Mammary epithelial cell (primary cell): ENCODE measurements at regions of chr1 and their contacts with region 1.

Region 1: DNA sequence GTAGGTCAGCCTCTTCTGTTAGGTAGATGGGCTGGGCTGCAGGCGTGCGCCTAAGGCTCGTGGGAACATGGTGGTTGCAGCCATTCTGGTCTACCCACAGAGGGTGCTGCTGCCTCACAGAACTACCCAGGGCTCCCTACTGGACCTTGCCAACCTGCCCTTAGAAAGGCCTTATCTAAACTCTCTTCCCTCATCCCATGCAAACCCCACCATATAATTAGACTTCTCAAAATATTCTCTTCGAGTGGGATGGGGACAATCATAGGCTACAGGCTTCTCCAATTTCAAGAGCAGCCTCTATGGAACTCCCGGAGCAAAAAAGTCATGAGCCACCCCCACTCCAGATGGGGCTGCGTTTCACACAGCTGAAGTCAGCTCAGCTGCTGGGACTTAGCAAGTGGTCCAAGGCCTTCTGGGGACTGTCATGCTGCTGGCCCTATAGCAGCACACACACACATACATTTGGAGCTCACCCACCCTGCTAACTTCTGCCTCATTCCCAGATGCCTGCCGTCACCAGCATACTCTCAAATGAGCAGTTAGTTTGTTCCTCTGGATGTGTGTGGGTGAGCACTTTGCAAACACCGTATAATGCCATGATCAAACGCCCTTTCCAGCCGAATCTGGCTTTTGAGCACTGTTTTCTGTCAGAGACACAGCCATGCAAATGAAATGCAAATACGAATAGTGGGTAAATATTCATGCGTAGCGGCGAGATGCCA is 6.1 kb upstream of the SDHB start:
- DNase-seq: peak; percentile 60
- H3K4me3 ChIP-seq: no peak overlapping the region
- H3K27ac ChIP-seq: no peak overlapping the region
- H3K4me1 ChIP-seq: peaks cover 8% of the 10 kb centered on the region
- H3K27me3 ChIP-seq: no peaks in the 10 kb centered on the region
- CTCF ChIP-seq: peak; percentile 76 to 85

Region 2: DNA sequence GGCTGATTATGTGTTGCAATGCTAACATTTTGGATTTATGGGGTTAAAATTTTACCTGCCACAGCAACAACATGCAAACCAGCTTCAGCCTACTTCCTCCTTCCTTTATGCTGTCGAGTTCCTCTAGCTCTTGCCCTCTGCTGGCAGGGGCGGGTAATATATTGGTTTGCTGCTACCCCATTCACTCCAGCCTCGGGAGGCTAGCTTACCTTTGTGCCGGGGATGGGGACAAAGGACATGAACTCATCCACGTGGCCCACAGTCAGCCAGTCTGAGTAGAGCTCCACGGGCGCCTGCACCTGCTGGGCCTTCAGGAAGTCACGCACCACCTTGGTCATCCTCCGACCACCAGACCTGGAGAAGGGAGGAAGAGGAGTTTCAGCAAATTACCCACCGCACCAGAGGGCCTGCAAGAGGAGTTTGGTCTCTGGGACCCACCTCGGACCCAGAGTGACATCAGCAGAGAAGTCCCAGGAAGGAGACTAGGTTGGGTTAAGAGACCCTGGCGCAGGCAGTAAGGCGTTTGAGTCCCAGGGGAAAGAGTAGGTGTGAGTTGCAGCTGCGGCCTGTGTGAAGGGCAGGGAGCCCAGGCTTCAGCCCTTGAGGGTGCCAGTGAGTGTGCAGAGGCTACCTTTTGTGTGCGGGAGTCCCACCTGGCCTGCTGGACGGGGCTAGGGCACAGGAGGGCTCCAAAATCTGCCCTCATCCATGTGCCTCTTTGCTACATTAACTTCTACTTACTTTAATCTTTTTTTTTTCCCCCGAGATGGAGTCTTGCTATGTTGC is 15.8 kb after region 1 on chr1:
- CTCF ChIA-PET with region 1: no interaction called
- dilution Hi-C with region 1: no loop called
- in situ Hi-C with region 1: no loop called
- intact Hi-C with region 1: loop called (anchors 1 kb)
- DNase-seq: no peak
- H3K4me3 ChIP-seq: no peak overlapping the region
- H3K27ac ChIP-seq: no peak overlapping the region
- H3K4me1 ChIP-seq: no peaks in the 10 kb centered on the region
- H3K27me3 ChIP-seq: no peaks in the 10 kb centered on the region
- CTCF ChIP-seq: peak; percentile 49 to 53

Region 3: GRCh38 chr1:17119076-17119772 is 59.3 kb after region 1 on chr1 and contains the start of gene PADI2:
- CTCF ChIA-PET with region 1: no interaction called
- dilution Hi-C with region 1: loop called (anchors 5 kb)
- in situ Hi-C with region 1: no loop called
- intact Hi-C with region 1: loop called (anchors 2 kb)
- DNase-seq: peak; percentile 59
- H3K4me3 ChIP-seq: peak within 1 kb of the TSS in 2 of 3 experiments; percentile 37 to 44
- H3K27ac ChIP-seq: no peak within 1 kb of the TSS
- H3K4me1 ChIP-seq: peaks cover 12% of the 10 kb centered on the region
- H3K27me3 ChIP-seq: no peaks in the 10 kb centered on the region
- CTCF ChIP-seq: no peak
- total RNA-seq, gene PADI2: 1.3 to 2.2 TPM

Region 4: DNA sequence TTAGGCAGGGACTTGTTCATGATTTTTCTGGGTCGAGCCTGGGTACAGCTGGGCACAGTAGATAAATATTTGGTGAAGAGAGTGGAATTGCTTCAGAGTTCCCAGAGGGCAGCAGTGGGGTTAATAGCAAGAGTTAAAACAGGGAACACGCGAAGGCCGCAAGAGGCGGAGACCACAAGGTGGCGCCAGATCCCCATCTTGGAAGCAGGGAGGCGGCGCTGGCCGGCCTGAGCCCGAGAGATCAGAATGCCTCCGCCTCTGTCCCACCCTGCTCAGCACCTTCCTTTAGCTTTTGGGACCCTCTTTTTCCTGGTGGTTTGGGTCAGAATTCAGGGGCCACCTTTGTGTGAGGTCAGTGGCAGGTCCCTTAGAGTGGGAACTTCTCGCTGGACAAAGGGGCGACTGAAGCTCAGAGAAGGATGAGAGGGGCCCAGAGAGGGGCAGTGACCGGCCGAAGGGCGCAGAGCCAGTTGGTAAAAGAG is 65.9 kb after region 1 on chr1:
- CTCF ChIA-PET with region 1: no interaction called
- dilution Hi-C with region 1: no loop called
- in situ Hi-C with region 1: no loop called
- intact Hi-C with region 1: loop called (anchors 1 kb)
- DNase-seq: peak; percentile 61
- H3K4me3 ChIP-seq: no peak overlapping the region
- H3K27ac ChIP-seq: no peak overlapping the region
- H3K4me1 ChIP-seq: peaks cover 31% of the 10 kb centered on the region
- H3K27me3 ChIP-seq: no peaks in the 10 kb centered on the region
- CTCF ChIP-seq: peak; percentile 86 to 96

Region 5: DNA sequence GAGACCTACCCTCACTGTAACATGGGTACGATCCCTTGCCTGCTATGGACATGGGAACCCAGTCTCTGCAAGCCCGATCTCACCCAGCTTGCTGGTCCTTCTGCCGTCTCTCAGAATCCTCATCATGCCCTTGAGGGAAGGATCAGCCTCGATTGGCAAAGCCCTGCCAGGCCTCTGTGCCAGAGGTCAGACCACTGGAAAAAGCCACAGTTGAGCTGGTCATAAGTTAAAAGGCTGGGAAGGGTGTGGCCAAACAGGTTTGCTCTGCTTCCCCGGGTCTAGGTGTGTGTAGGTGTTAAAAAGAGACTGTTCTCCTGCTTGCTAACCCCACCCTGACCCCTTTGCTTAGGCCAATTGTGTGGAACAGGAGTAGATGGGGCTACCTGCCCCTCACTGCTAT is 169.5 kb after region 1 on chr1:
- CTCF ChIA-PET with region 1: no interaction called
- dilution Hi-C with region 1: loop called (anchors 10 kb)
- in situ Hi-C with region 1: loop called in 1 of 2 experiments (anchors 5 kb)
- intact Hi-C with region 1: no loop called
- DNase-seq: peak; percentile 56
- H3K4me3 ChIP-seq: no peak overlapping the region
- H3K27ac ChIP-seq: no peak overlapping the region
- H3K4me1 ChIP-seq: peaks cover 45% of the 10 kb centered on the region
- H3K27me3 ChIP-seq: no peaks in the 10 kb centered on the region
- CTCF ChIP-seq: no peak

Region 6: DNA sequence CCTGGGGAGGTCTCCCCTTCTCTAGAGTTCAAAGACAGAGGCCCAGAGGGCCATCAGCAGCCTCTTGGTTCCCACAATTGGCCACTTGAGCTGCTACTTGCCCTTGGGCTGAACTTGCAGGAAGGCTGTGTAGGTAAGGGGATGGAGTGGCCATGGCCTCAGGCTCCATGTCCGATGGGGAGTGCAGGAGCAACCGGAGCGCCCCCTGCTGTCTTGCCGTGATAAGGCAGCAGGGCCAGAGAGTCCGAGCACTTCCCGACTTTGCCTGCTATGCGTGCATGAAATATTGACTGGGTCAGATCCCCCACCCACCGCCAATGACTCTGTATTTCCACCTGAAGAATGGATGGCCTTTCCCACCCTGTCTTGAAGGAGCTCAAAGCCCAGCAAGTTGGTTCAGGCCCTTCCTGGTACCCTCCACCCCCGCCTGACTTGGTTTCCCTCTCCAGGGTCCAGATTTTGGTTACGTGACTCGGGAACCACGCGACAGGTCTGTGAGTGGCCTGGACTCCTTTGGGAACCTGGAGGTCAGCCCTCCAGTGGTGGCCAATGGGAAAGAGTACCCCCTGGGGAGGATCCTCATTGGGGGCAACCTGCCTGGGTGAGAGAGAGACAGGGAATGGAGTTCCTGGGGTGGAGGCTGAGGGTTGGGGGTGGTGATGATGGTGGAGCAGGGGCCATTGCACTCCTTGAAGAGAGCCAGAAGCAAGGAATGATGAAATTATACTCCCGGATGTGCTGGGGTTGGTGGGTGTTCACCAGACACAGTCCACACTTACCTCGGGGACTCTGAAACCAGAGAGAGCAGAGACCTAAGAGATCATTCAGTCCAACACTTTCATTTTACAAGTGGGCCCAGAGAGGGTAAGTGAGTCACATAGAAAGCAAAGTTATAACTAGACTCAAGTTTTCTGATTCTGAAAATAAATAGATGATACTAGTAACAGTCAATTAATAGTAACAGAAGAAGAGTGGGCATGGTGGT is 214.6 kb after region 1 on chr1:
- CTCF ChIA-PET with region 1: no interaction called
- dilution Hi-C with region 1: no loop called
- in situ Hi-C with region 1: no loop called
- intact Hi-C with region 1: loop called (anchors 1 kb)
- DNase-seq: peak; percentile 39
- H3K4me3 ChIP-seq: no peak overlapping the region
- H3K27ac ChIP-seq: no peak overlapping the region
- H3K4me1 ChIP-seq: peaks cover 10% of the 10 kb centered on the region
- H3K27me3 ChIP-seq: no peaks in the 10 kb centered on the region
- CTCF ChIP-seq: peak; percentile 63 to 77

Region 7: GRCh38 chr1:17405898-17406759 is 346.2 kb after region 1 on chr1:
- CTCF ChIA-PET with region 1: no interaction called
- dilution Hi-C with region 1: no loop called
- in situ Hi-C with region 1: loop called in 1 of 2 experiments (anchors 10 kb)
- intact Hi-C with region 1: loop called (anchors 1 kb)
- DNase-seq: peak; percentile 32
- H3K4me3 ChIP-seq: no peak overlapping the region
- H3K27ac ChIP-seq: no peak overlapping the region
- H3K4me1 ChIP-seq: peaks cover 19% of the 10 kb centered on the region
- H3K27me3 ChIP-seq: no peaks in the 10 kb centered on the region
- CTCF ChIP-seq: peak; percentile 79 to 83